ENCODE measurements at regions of chr14 and their contacts with region 1.

Region 1: GRCh38 chr14:21486640-21487087 is 9.7 kb downstream of the TOX4 start:
- DNase-seq: no peak
- ATAC-seq: no peak
- H3K4me3 ChIP-seq: no peak overlapping the region
- H3K4me3 Mint-ChIP-seq: no peak overlapping the region
- H3K27ac ChIP-seq: no peak overlapping the region
- H3K27ac Mint-ChIP-seq: no peak overlapping the region
- H3K4me1 ChIP-seq: no peaks in the 10 kb centered on the region
- H3K4me1 Mint-ChIP-seq: peaks cover 4% of the 10 kb centered on the region
- H3K27me3 ChIP-seq: no peaks in the 10 kb centered on the region
- H3K27me3 Mint-ChIP-seq: no peaks in the 10 kb centered on the region
- CTCF ChIP-seq: no peak

Region 2: GRCh38 chr14:21498553-21499526 is 12.2 kb after region 1 on chr14:
- CTCF ChIA-PET with region 1: interaction called, 11 read pairs
- POLR2A ChIA-PET with region 1: no interaction called
- intact Hi-C with region 1: no loop called
- DNase-seq: peak; percentile 61
- ATAC-seq: peak; percentile 36
- H3K4me3 ChIP-seq: no peak overlapping the region
- H3K4me3 Mint-ChIP-seq: no peak overlapping the region
- H3K27ac ChIP-seq: no peak overlapping the region
- H3K27ac Mint-ChIP-seq: no peak overlapping the region
- H3K4me1 ChIP-seq: no peaks in the 10 kb centered on the region
- H3K4me1 Mint-ChIP-seq: no peaks in the 10 kb centered on the region
- H3K27me3 ChIP-seq: no peaks in the 10 kb centered on the region
- H3K27me3 Mint-ChIP-seq: no peaks in the 10 kb centered on the region
- CTCF ChIP-seq: peak; percentile 72